ENCODE measurements at regions of chr6 and their contacts with region 1.

Region 1: DNA sequence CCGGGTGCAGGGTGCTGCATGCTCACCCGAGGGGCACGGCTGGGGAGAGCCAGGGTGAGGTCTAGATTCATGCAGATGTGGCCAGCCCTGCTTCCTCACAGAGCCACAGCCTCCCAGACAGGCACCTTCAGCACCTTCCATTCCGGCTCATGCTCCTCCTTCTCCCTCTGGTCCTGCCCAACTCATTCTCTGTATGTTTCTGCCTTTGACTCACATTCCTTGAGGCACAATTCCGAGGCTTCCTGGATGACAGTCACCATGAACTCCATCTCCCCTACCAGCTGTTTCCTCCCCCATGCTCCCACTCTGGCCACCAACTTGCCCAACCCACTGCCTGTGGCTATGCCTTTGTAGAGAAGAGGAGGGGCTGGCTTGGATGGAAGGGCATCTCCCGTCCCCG is 35.4 kb downstream of the DACT2 start:
- DNase-seq: no peak
- H3K4me3 Mint-ChIP-seq: no peak overlapping the region
- H3K27ac Mint-ChIP-seq: no peak overlapping the region
- H3K4me1 Mint-ChIP-seq: peaks cover 17% of the 10 kb centered on the region
- H3K27me3 Mint-ChIP-seq: no peaks in the 10 kb centered on the region

Region 2: DNA sequence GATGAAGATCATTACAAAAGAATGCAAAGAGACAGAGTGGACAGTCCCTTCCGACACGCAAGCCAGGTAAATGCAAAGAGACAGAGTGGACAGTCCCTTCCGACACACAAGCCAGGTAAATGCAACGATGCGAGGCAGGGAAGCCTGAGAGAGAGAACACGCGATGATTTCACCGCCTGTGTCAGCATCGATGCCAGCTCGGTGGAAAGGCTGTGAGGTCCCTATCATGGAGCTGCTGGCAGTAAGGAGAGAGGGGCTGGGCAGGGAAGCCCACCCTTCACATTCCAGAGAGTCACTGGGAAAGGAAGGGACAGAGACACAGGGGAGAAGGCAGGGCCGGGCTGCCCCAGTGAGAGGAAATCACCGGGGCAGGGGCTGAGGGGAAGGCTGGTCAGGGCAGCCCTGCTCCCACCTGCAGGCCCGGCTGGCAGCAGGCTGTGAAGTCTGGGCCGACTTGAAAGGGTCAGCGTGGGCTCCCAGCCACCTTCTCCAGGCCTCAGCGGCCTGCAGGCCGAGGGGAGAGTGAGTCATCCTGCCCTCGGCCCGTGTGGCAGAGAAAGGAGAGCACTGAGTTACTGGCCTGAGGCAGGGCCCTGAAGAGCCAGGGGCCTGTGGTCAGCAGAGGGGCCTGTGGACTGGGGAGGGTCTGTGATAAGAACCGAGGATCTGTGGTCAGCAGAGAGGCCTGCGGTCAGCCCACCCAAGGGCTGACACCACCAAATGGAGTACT is 45.0 kb before region 1 on chr6:
- intact Hi-C with region 1: loop called (anchors 5 kb)
- DNase-seq: no peak
- H3K4me3 Mint-ChIP-seq: no peak overlapping the region
- H3K27ac Mint-ChIP-seq: peak overlapping the region; percentile 52
- H3K4me1 Mint-ChIP-seq: peaks cover 21% of the 10 kb centered on the region
- H3K27me3 Mint-ChIP-seq: no peaks in the 10 kb centered on the region

Region 3: DNA sequence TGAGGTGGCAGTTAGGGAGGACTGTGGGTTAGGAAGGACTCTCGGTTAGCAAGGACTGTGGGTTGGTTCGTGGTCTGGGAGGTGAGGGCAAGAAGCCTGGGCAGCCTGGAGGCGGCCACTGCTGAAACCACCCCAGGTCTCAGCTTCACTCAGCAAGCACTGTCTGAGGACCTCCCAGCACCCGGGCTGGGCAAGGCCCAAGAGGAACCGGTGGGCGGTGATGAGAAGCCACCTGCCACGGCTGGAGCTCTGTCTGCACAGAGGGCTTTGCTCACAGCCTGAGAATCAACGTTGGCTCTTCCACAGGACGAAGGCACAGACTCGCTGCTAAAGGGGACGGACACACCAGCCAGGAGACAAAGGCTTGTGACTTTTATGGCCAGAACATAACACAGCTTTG is 34.0 kb before region 1 on chr6:
- intact Hi-C with region 1: loop called (anchors 5 kb)
- DNase-seq: no peak
- H3K4me3 Mint-ChIP-seq: no peak overlapping the region
- H3K27ac Mint-ChIP-seq: no peak overlapping the region
- H3K4me1 Mint-ChIP-seq: no peaks in the 10 kb centered on the region
- H3K27me3 Mint-ChIP-seq: no peaks in the 10 kb centered on the region

Region 4: DNA sequence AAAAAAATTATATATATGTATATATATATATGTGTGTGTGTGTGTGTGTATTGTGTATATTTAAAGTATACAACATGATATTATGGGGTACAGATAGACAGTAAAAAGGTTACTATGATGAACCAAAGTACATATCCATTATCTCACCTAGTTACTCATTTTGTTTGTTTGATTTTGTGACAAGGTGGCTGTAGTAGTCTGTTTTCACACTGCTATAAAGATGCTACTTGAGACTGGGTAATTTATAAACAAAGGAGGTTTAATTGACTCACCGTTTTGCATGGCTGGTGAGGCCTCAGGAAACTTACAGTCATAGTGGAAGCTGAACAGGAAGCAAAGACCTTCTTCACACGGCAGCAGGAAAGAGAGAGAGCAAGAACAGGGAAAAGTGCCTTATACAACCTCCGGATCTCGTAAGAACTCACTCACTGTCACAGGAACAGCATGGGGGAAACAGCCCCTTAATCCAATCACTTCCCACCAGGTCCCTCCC is 65.5 kb after region 1 on chr6:
- intact Hi-C with region 1: loop called (anchors 1 kb)
- DNase-seq: no peak
- H3K4me3 Mint-ChIP-seq: no peak overlapping the region
- H3K27ac Mint-ChIP-seq: peak overlapping the region; percentile 82
- H3K4me1 Mint-ChIP-seq: peaks cover 17% of the 10 kb centered on the region
- H3K27me3 Mint-ChIP-seq: peaks cover 7% of the 10 kb centered on the region

Measured in activated T-helper 1 cell treated with anti-CD3 and anti-CD28 coated beads, Interleukin-12 subunit alpha, Interleukin-12 subunit beta, Interleukin-2, Interleukin-4 antibody, amounts not matched to agents 30 ng/mL and 10 ng/mL and 1 ng/mL, durations not matched to agents 14 hours and 24 hours and 36 hours (primary cell).